CD4-positive, alpha-beta memory T cell (primary cell): ENCODE measurements at regions of chr1 and their contacts with region 1.

Region 1: GRCh38 chr1:94805912-94806311 is 14.2 kb upstream of the SLC44A3 start:
- DNase-seq: peak; percentile 33 to 46 (median 44)
- H3K4me3 ChIP-seq: no peak overlapping the region
- H3K4me3 Mint-ChIP-seq: peak overlapping the region in 2 of 8 donors; percentile 31 to 55
- H3K27ac ChIP-seq: no peak overlapping the region
- H3K27ac Mint-ChIP-seq: peak overlapping the region in 1 of 7 donors; percentile 2
- H3K4me1 ChIP-seq: peaks cover 4% of the 10 kb centered on the region
- H3K4me1 Mint-ChIP-seq: peaks cover 12 to 34% (median 18%) of the 10 kb centered on the region in 4 donors
- H3K27me3 ChIP-seq: no peaks in the 10 kb centered on the region
- H3K27me3 Mint-ChIP-seq: peaks cover 1 to 5% of the 10 kb centered on the region in 2 donors

Region 2: GRCh38 chr1:94039514-94039870 is 766.4 kb before region 1 on chr1:
- CTCF ChIA-PET with region 1: interaction called, 12 read pairs
- POLR2A ChIA-PET with region 1: no interaction called
- intact Hi-C with region 1: loop called (anchors 5 kb)
- DNase-seq: peak in 4 of 5 donors; percentile 22 to 37 (median 25)
- H3K4me3 ChIP-seq: no peak overlapping the region
- H3K4me3 Mint-ChIP-seq: no peak overlapping the region
- H3K27ac ChIP-seq: no peak overlapping the region
- H3K27ac Mint-ChIP-seq: no peak overlapping the region
- H3K4me1 ChIP-seq: no peaks in the 10 kb centered on the region
- H3K4me1 Mint-ChIP-seq: peaks cover 0 to 2% (median 0%) of the 10 kb centered on the region in 4 donors
- H3K27me3 ChIP-seq: no peaks in the 10 kb centered on the region
- H3K27me3 Mint-ChIP-seq: peaks cover 17 to 34% of the 10 kb centered on the region in 2 donors

Region 3: GRCh38 chr1:94471271-94471670 is 334.6 kb before region 1 on chr1:
- CTCF ChIA-PET with region 1: interaction called, 20 read pairs
- POLR2A ChIA-PET with region 1: no interaction called
- intact Hi-C with region 1: no loop called
- DNase-seq: no peak
- H3K4me3 ChIP-seq: no peak overlapping the region
- H3K4me3 Mint-ChIP-seq: no peak overlapping the region
- H3K27ac ChIP-seq: no peak overlapping the region
- H3K27ac Mint-ChIP-seq: no peak overlapping the region
- H3K4me1 ChIP-seq: no peaks in the 10 kb centered on the region
- H3K4me1 Mint-ChIP-seq: peaks cover 0 to 1% (median 0%) of the 10 kb centered on the region in 4 donors
- H3K27me3 ChIP-seq: no peaks in the 10 kb centered on the region
- H3K27me3 Mint-ChIP-seq: no peaks in the 10 kb centered on the region

Region 4: DNA sequence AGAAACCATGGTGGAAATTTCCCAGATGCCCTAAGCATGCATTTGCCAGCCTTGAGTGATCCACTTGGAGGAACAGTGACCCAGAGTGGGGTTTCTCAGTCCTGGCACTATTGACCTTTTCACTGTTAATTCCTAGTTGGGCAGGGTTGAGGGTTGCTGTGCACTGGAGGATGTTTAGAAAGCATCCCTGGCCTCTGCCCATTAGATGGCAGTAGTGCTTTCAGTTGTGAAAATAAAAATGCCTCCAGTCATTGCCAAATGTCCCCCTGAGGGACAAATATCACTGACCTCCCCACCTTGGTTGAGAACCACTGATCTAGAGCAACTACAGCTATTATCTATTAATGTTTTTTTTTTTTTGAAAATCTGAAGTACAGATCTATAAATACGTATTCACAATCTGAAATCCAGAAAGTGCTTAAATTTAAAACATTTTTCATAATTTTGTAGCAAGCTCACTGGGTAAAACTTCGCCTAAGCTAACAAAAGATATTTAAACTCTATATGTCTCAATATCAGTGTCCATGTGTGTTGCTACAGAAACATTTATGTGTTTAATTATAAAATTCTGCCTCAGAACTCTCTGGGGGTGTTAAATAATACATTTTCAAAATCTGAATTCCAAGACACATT is 291.7 kb before region 1 on chr1:
- CTCF ChIA-PET with region 1: interaction called, 4 read pairs
- POLR2A ChIA-PET with region 1: no interaction called
- intact Hi-C with region 1: loop called (anchors 1 kb)
- DNase-seq: no peak
- H3K4me3 ChIP-seq: no peak overlapping the region
- H3K4me3 Mint-ChIP-seq: no peak overlapping the region
- H3K27ac ChIP-seq: no peak overlapping the region
- H3K27ac Mint-ChIP-seq: no peak overlapping the region
- H3K4me1 ChIP-seq: no peaks in the 10 kb centered on the region
- H3K4me1 Mint-ChIP-seq: no peaks in the 10 kb centered on the region
- H3K27me3 ChIP-seq: no peaks in the 10 kb centered on the region
- H3K27me3 Mint-ChIP-seq: no peaks in the 10 kb centered on the region

Region 5: DNA sequence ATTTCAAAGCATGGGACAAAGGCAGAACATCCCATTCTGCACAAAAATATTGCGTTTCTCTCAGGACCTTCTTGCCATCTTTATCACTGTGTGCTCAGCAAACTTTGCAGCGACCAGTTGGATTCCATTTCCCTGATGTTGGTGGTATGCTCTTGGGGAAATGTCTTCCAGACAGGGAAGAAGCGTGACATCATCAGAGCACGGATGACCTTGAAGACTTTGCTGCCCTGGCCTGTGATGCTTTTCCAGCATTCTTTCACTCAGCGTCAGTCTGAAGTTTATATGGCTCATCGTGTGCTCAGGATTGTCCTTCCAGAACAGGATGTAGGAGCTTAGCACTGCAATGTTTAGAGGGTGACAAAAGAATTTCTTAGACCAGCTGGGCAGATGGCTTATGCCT is 133.0 kb before region 1 on chr1:
- CTCF ChIA-PET with region 1: no interaction called
- POLR2A ChIA-PET with region 1: no interaction called
- intact Hi-C with region 1: no loop called
- DNase-seq: no peak
- H3K4me3 ChIP-seq: no peak overlapping the region
- H3K4me3 Mint-ChIP-seq: no peak overlapping the region
- H3K27ac ChIP-seq: no peak overlapping the region
- H3K27ac Mint-ChIP-seq: no peak overlapping the region
- H3K4me1 ChIP-seq: no peaks in the 10 kb centered on the region
- H3K4me1 Mint-ChIP-seq: no peaks in the 10 kb centered on the region
- H3K27me3 ChIP-seq: no peaks in the 10 kb centered on the region
- H3K27me3 Mint-ChIP-seq: peaks cover 2 to 6% of the 10 kb centered on the region in 2 donors

Region 6: GRCh38 chr1:94698759-94699502 is 107.0 kb before region 1 on chr1:
- CTCF ChIA-PET with region 1: no interaction called
- POLR2A ChIA-PET with region 1: no interaction called
- intact Hi-C with region 1: no loop called
- DNase-seq: no peak
- H3K4me3 ChIP-seq: no peak overlapping the region
- H3K4me3 Mint-ChIP-seq: no peak overlapping the region
- H3K27ac ChIP-seq: no peak overlapping the region
- H3K27ac Mint-ChIP-seq: no peak overlapping the region
- H3K4me1 ChIP-seq: no peaks in the 10 kb centered on the region
- H3K4me1 Mint-ChIP-seq: no peaks in the 10 kb centered on the region
- H3K27me3 ChIP-seq: no peaks in the 10 kb centered on the region
- H3K27me3 Mint-ChIP-seq: peaks cover 3 to 4% of the 10 kb centered on the region in 2 donors

Region 7: GRCh38 chr1:94709891-94710581 is 95.9 kb before region 1 on chr1:
- CTCF ChIA-PET with region 1: no interaction called
- POLR2A ChIA-PET with region 1: no interaction called
- intact Hi-C with region 1: no loop called
- DNase-seq: no peak
- H3K4me3 ChIP-seq: no peak overlapping the region
- H3K4me3 Mint-ChIP-seq: no peak overlapping the region
- H3K27ac ChIP-seq: no peak overlapping the region
- H3K27ac Mint-ChIP-seq: no peak overlapping the region
- H3K4me1 ChIP-seq: no peaks in the 10 kb centered on the region
- H3K4me1 Mint-ChIP-seq: no peaks in the 10 kb centered on the region
- H3K27me3 ChIP-seq: no peaks in the 10 kb centered on the region
- H3K27me3 Mint-ChIP-seq: peaks cover 0 to 7% of the 10 kb centered on the region in 2 donors

Region 8: GRCh38 chr1:94719926-94720793 is 85.8 kb before region 1 on chr1:
- CTCF ChIA-PET with region 1: no interaction called
- POLR2A ChIA-PET with region 1: no interaction called
- intact Hi-C with region 1: no loop called
- DNase-seq: no peak
- H3K4me3 ChIP-seq: no peak overlapping the region
- H3K4me3 Mint-ChIP-seq: no peak overlapping the region
- H3K27ac ChIP-seq: no peak overlapping the region
- H3K27ac Mint-ChIP-seq: no peak overlapping the region
- H3K4me1 ChIP-seq: no peaks in the 10 kb centered on the region
- H3K4me1 Mint-ChIP-seq: no peaks in the 10 kb centered on the region
- H3K27me3 ChIP-seq: no peaks in the 10 kb centered on the region
- H3K27me3 Mint-ChIP-seq: peaks cover 1 to 4% of the 10 kb centered on the region in 2 donors